ENCODE measurements at regions of chr12 and their contacts with region 1.

Region 1: DNA sequence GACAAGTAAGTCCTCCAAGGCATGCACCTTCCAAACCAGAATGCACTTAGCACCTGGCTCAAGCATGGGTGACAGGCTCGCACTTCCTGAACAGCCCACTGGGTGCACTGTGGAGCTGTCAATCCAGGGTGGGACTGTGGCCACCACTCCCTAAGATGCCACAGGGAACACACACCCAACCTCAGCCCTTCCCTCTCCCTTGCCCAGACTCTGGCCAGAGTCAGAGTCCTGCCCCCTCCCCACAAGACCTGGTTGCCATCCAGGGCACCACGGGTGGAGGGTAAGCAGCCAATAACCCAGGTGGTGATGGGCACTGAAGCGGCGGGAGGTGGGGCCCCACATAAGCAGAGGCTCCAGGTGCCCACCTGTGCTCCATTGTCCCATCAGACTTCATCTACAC is 160.6 kb downstream of the MYRFL start:
- DNase-seq: peak in 1 of 2 experiments; percentile 18
- H3K4me3 ChIP-seq: no peak overlapping the region
- H3K27ac ChIP-seq: no peak overlapping the region
- H3K4me1 ChIP-seq: peaks cover 23% of the 10 kb centered on the region
- H3K27me3 ChIP-seq: no peaks in the 10 kb centered on the region
- CTCF ChIP-seq: peak; percentile 49

Region 2: GRCh38 chr12:70049600-70050360 is 64.1 kb after region 1 on chr12:
- CTCF ChIA-PET with region 1: no interaction called
- POLR2A ChIA-PET with region 1: no interaction called
- intact Hi-C with region 1: loop called (anchors 1 kb)
- DNase-seq: peak; percentile 49 to 88
- H3K4me3 ChIP-seq: peak overlapping the region; percentile 15; the same call in 1 of the 2 replicates
- H3K27ac ChIP-seq: peak overlapping the region; percentile 83
- H3K4me1 ChIP-seq: peaks cover 47% of the 10 kb centered on the region
- H3K27me3 ChIP-seq: no peaks in the 10 kb centered on the region
- CTCF ChIP-seq: no peak

Region 3: GRCh38 chr12:70106347-70106746 is 120.7 kb after region 1 on chr12:
- CTCF ChIA-PET with region 1: no interaction called
- POLR2A ChIA-PET with region 1: no interaction called
- intact Hi-C with region 1: loop called (anchors 10 kb)
- DNase-seq: no peak
- H3K4me3 ChIP-seq: no peak overlapping the region
- H3K27ac ChIP-seq: no peak overlapping the region
- H3K4me1 ChIP-seq: no peaks in the 10 kb centered on the region
- H3K27me3 ChIP-seq: no peaks in the 10 kb centered on the region
- CTCF ChIP-seq: no peak